ENCODE measurements at regions of chr15 and their contacts with region 1.

Region 1: DNA sequence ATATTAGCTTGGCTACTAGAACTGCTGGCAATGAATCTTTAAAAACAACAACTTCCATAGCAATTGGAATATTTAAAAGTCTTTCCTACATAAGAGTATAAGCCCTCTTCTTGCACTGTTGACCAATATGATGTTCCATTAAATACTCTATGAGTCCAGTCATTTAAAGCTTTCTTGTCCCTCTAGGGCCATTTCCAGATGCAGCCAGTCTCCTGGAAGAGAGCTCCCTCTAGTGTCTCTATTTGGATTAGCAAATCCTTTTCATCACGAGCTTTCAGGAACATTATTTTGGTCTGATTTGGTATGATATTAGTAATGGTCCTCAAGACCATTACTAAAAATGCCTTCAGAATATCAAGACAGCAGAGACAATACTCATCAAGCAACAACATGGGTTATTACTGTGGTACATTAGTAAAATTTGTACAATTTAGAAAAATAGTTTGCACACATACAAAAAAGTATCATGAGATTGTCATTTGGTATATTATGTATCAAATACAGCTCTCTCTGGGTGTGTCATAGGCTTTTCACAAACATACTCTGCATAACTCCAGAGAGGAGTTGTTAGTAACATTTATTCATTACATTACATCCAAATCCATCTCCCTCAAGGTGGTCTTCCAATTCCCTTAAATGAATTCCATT is 101.3 kb downstream of the DPH6 start:
- DNase-seq: peak; percentile 62
- H3K4me3 Mint-ChIP-seq: no peak overlapping the region
- H3K27ac Mint-ChIP-seq: no peak overlapping the region
- H3K4me1 Mint-ChIP-seq: no peaks in the 10 kb centered on the region
- H3K27me3 Mint-ChIP-seq: no peaks in the 10 kb centered on the region
- CTCF ChIP-seq: peak; percentile 76

Region 2: DNA sequence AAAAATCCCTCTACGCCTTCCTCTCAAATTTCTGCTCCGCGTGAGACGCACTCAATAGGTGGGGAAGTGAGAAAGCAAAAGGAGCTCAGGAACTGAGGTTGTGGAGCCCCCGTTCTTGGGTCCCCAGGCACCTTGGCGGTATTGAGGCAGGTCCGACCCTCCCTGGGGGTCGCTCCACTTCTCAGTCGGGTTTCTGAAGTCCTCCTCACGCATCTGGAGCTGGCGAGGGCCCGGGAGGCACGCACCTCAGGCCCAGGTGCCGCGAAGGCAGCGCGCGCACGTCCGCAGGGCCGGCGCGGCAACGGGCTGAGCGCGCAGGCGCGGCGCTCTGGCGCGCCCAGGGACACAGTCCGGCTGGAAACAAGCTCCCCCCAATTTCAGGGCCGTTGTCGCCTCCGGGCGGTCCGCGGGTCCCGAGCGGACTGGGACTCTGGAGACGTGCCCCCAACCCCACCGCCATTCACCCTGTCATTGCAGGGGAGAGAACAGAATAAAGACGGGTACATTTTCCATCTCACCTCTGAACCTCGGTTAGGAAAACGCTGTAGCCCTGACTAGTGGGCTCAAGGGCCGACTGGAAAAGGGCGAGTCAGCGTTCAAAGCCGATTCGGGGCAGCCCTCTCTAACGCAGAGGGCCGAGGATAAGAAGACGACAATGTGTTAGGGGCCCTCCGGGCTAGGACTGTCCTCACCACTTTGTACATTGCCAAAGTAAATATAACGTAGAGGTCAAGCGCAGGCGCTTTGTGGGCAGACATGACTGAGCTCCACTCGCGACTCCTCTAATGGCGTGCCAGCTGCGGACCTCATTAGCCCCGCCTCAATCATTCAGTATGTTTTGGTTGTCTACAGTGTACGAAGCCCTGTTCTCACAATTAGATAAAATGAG is 456.5 kb before region 1 on chr15 and contains the start of gene ZNF770:
- CTCF ChIA-PET with region 1: no interaction called
- POLR2A ChIA-PET with region 1: no interaction called
- intact Hi-C with region 1: loop called (anchors 10 kb)
- DNase-seq: peak; percentile 69
- H3K4me3 Mint-ChIP-seq: peak within 1 kb of the TSS; percentile 91
- H3K27ac Mint-ChIP-seq: peak within 1 kb of the TSS; percentile 98
- H3K4me1 Mint-ChIP-seq: peaks cover 12% of the 10 kb centered on the region
- H3K27me3 Mint-ChIP-seq: no peaks in the 10 kb centered on the region
- CTCF ChIP-seq: no peak
- total RNA-seq, gene ZNF770: 61.0 and 73.6 TPM in 2 replicates

Region 3: DNA sequence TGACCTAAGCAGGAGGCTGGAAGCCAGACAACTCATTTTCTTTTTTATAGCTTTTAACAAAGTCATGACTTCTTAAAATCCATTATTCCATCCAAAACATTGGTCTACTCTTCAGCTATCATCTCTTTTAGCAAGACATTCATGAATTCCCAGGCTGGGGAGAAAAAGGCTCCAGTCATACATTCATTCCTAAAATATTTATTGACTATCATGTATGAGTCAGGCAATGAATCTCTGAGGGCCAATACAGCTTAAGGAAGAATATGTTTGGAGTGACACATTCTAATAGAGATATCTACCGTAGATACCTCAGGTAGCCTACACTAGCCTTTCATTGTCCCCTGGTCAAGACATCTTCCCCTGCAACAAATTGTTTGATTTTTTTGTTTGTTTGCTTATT is 163.2 kb before region 1 on chr15:
- CTCF ChIA-PET with region 1: interaction called, 21 read pairs
- POLR2A ChIA-PET with region 1: interaction called, 3 read pairs
- intact Hi-C with region 1: no loop called
- DNase-seq: no peak
- H3K4me3 Mint-ChIP-seq: no peak overlapping the region
- H3K27ac Mint-ChIP-seq: no peak overlapping the region
- H3K4me1 Mint-ChIP-seq: no peaks in the 10 kb centered on the region
- H3K27me3 Mint-ChIP-seq: no peaks in the 10 kb centered on the region
- CTCF ChIP-seq: no peak

Region 4: GRCh38 chr15:35301088-35301487 is 143.6 kb before region 1 on chr15:
- CTCF ChIA-PET with region 1: interaction called, 240 read pairs
- POLR2A ChIA-PET with region 1: interaction called, 3 read pairs
- intact Hi-C with region 1: no loop called
- DNase-seq: no peak
- H3K4me3 Mint-ChIP-seq: no peak overlapping the region
- H3K27ac Mint-ChIP-seq: no peak overlapping the region
- H3K4me1 Mint-ChIP-seq: peaks cover 15% of the 10 kb centered on the region
- H3K27me3 Mint-ChIP-seq: no peaks in the 10 kb centered on the region
- CTCF ChIP-seq: no peak

Region 5: DNA sequence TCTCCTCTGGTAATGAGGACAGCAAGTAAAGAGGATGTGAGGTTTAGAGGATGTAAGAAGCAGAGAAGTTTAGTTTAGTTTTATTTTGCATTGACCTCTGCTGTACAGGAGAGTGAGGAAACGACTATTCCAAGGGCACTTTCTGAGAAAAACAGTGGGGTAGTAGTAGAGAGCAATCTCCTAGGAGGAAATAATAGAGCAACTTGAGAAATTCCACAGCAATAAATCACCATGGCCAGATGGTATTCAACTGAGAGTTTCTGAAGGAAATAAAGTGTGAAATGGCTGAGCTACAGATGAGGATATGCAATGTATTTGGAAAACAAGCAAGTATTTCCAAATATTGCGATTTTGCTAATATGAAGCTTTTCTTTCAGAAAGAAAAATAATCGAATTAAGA is 17.6 kb before region 1 on chr15:
- CTCF ChIA-PET with region 1: interaction called, 44 read pairs
- POLR2A ChIA-PET with region 1: no interaction called
- intact Hi-C with region 1: no loop called
- DNase-seq: peak; percentile 34
- H3K4me3 Mint-ChIP-seq: no peak overlapping the region
- H3K27ac Mint-ChIP-seq: no peak overlapping the region
- H3K4me1 Mint-ChIP-seq: peaks cover 6% of the 10 kb centered on the region
- H3K27me3 Mint-ChIP-seq: no peaks in the 10 kb centered on the region
- CTCF ChIP-seq: no peak

Region 6: DNA sequence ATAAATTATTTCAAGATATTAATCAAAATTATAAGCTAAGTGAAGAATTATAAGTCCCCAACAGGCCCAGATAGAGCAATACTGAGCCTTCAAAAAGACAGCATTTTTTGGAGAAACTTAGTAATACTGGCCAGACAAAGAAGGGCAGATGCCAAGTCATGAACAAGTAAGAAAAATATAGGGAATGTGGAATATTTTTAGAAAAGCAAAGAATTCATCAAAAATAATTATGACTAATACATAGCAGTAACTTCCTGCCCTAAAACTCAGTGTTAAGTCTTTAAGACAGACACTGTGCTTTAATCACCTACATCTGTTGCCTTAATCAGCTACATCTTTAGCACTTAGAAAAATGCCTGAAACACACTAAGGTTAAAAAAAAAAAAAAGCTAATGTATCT is 70.1 kb after region 1 on chr15:
- CTCF ChIA-PET with region 1: no interaction called
- POLR2A ChIA-PET with region 1: no interaction called
- intact Hi-C with region 1: no loop called
- DNase-seq: no peak
- H3K4me3 Mint-ChIP-seq: no peak overlapping the region
- H3K27ac Mint-ChIP-seq: no peak overlapping the region
- H3K4me1 Mint-ChIP-seq: peaks cover 6% of the 10 kb centered on the region
- H3K27me3 Mint-ChIP-seq: no peaks in the 10 kb centered on the region
- CTCF ChIP-seq: no peak

Measured in MCF 10A (cell line).